ENCODE measurements at regions of chr12 and their contacts with region 1.

Region 1: GRCh38 chr12:38332814-38333213 is 16.2 kb downstream of the ALG10B start:
- DNase-seq: no peak
- H3K4me3 ChIP-seq: no peak overlapping the region
- H3K27ac ChIP-seq: no peak overlapping the region
- H3K4me1 ChIP-seq: no peaks in the 10 kb centered on the region
- H3K27me3 ChIP-seq: no peaks in the 10 kb centered on the region
- CTCF ChIP-seq: no peak

Region 2: DNA sequence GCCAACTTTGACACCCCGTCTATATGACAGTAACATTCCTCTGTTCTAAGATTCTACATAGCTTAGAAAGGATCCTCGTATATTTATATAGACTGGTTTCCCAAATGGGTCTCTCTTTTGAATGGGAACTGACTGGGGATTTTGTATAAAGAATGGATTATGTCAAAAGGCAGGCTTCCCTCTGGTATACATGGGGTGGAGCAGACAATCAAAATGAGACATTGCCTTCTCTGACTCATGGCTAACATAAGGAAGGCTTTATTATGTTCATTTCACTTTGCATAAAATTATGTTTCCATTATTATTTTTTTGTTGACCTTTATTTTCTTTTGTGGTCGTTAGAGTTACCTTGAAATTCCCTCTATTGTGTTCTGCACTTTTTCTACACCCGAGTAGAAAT is 194.8 kb after region 1 on chr12:
- CTCF ChIA-PET with region 1: no interaction called
- dilution Hi-C with region 1: no loop called
- in situ Hi-C with region 1: no loop called
- intact Hi-C with region 1: no loop called
- DNase-seq: peak; percentile 21
- H3K4me3 ChIP-seq: no peak overlapping the region
- H3K27ac ChIP-seq: no peak overlapping the region
- H3K4me1 ChIP-seq: no peaks in the 10 kb centered on the region
- H3K27me3 ChIP-seq: peaks cover 6% of the 10 kb centered on the region
- CTCF ChIP-seq: no peak

Region 3: GRCh38 chr12:38639625-38640155 is 306.9 kb after region 1 on chr12:
- CTCF ChIA-PET with region 1: no interaction called
- dilution Hi-C with region 1: no loop called
- in situ Hi-C with region 1: no loop called
- intact Hi-C with region 1: loop called (anchors 10 kb)
- DNase-seq: no peak
- H3K4me3 ChIP-seq: no peak overlapping the region
- H3K27ac ChIP-seq: no peak overlapping the region
- H3K4me1 ChIP-seq: no peaks in the 10 kb centered on the region
- H3K27me3 ChIP-seq: peaks cover 3% of the 10 kb centered on the region
- CTCF ChIP-seq: no peak

Region 4: GRCh38 chr12:38775457-38775856 is 442.6 kb after region 1 on chr12:
- CTCF ChIA-PET with region 1: interaction called, 19 read pairs
- dilution Hi-C with region 1: no loop called
- in situ Hi-C with region 1: no loop called
- intact Hi-C with region 1: no loop called
- DNase-seq: peak; percentile 25
- H3K4me3 ChIP-seq: no peak overlapping the region
- H3K27ac ChIP-seq: no peak overlapping the region
- H3K4me1 ChIP-seq: no peaks in the 10 kb centered on the region
- H3K27me3 ChIP-seq: no peaks in the 10 kb centered on the region
- CTCF ChIP-seq: no peak

Region 5: DNA sequence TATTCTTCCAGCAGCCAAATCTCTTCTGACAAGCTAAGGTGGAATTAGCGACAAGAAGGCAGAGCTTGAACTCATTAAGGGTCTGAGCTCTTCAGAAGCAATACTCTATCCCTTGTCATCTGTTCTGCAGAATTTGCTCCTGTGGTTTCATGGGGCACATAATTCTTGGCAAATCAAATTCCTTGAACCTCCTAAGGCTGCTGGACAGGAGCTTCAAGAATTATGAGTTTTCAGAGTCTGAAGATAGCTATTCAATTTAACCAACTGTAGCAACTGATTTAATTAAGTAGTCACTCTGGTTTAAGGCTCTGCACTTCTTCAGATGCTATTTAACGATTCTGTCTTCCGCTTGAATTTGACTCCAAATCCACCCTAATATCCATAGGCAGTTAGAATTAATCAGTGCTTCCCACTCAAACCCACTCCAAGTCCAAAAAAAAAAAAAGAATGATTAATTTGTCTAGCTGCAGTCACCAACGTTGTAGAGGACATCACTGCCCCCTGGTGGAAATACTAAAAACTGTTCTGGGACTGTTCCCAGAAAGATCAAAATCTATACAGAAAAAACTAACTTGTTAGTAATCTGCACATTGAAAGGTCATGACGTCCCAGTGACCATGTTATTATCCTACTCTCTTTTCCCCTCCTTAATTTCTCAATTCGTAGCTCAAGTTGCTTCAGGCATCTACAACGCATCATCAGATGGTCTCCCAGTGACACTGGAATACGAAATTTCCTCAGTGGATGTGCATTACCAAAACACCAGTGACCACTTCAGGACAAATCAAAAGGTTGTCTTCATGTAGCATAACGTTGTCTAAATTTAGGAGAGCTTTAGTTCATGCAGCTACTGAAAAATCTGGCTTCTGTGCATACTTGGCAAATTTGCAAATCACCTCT is 940.3 kb after region 1 on chr12:
- CTCF ChIA-PET with region 1: no interaction called
- dilution Hi-C with region 1: no loop called
- in situ Hi-C with region 1: loop called in 1 of 2 experiments (anchors 10 kb)
- intact Hi-C with region 1: loop called (anchors 2 kb)
- DNase-seq: peak; percentile 35
- H3K4me3 ChIP-seq: no peak overlapping the region
- H3K27ac ChIP-seq: no peak overlapping the region
- H3K4me1 ChIP-seq: no peaks in the 10 kb centered on the region
- H3K27me3 ChIP-seq: no peaks in the 10 kb centered on the region
- CTCF ChIP-seq: peak; percentile 58 to 70